ENCODE measurements at regions of chr1 and their contacts with region 1.

Region 1: DNA sequence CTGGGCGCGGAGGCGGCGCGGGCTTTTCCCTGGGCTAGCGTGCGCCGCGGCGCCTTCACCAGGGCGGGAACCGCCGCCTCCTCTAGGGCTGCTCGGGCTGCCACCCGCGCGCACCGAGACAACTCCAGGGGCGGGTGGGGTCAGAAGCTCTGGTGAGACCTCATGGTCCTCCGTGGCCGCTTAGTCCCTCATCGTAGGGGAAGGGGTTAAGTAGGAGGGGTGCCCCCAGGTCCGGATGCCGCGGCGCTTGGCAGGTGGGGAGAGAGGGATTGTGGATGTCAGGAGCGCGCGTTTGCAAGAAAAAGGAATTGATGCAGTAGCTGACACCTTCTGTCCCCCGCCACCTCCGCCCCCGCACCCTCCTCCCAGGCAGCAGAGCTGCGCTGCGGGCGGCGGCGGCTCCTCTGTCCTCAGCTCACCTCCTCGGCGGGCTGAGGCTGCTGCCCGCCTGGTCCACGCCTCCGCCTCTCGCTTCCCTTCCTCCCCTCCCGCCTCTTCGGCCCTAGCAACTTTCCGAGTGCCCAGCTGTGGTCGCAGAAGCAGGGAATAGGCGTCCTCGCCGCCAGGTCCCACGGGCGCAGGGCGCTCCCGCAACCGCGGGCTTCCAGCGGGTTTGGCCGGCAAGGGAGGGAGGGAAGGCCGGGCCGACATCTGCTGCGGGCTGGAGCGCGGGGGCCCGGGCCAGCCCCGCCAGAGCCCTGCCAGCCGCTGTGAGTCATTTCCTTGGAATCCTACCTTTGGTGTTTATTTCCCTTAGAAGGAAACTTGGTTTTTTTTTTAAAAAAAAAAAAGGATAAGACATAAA is 822 bp downstream of the SERTAD4 start:
- DNase-seq: peak in 1 of 2 donors; percentile 52
- ATAC-seq: peak; percentile 25 to 63 (median 47)
- H3K4me3 ChIP-seq: peak overlapping the region; percentile 38 to 82 (median 66)
- H3K27ac ChIP-seq: peak overlapping the region; percentile 42 to 96 (median 88)
- H3K4me1 ChIP-seq: peaks cover 0 to 48% (median 36%) of the 10 kb centered on the region in 9 donors
- H3K27me3 ChIP-seq: peaks cover 0 to 86% (median 5%) of the 10 kb centered on the region in 7 donors
- CTCF ChIP-seq: no peak

Region 2: GRCh38 chr1:209965996-209966395 is 267.4 kb before region 1 on chr1:
- intact Hi-C with region 1: no loop called
- DNase-seq: no peak
- ATAC-seq: no peak
- H3K4me3 ChIP-seq: no peak overlapping the region
- H3K27ac ChIP-seq: no peak overlapping the region
- H3K4me1 ChIP-seq: no peaks in the 10 kb centered on the region
- H3K27me3 ChIP-seq: peaks cover 0 to under 1% (median 0%) of the 10 kb centered on the region in 7 donors
- CTCF ChIP-seq: no peak

Region 3: DNA sequence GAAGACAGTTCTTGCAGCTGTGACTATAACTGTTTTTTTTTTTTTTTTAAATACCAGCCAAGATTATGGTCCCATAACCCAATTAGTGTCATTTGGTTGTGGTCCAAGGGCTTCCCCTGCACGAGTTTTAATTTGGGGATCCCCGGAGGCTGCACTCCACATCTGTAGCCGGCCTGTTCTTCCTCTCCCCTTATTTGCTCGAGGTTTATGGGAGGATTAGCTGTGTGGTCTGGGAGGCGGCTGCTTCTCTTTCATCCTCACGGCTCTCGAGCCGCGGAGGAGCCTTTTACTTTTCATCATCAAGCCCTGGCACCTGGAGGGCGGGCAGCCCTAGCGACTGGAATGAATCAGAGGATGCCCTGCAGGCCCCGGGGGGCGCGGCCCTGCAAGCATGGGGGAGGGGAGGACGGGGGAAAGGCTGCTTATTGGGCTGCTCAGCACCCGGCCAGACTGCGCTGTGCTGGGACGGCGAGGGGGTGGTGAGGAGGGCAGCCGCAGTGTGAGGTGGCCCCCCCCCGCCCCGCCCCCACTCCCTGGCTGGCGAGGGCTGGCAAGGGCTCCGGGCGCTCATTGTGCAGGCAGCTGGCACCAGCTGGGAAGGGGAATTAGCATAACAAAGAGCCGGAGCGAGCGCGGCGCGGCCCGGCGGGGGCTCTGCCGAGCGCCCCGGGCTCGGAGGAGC is 17.7 kb after region 1 on chr1:
- intact Hi-C with region 1: loop called in 1 of 10 experiments (anchors 1 kb)
- DNase-seq: peak; percentile 35 to 42
- ATAC-seq: peak; percentile 44 to 71 (median 62)
- H3K4me3 ChIP-seq: peak overlapping the region in 9 of 10 donors; percentile 44 to 60 (median 56)
- H3K27ac ChIP-seq: peak overlapping the region in 5 of 10 donors; percentile 35 to 56 (median 44)
- H3K4me1 ChIP-seq: peaks cover 0 to 30% (median 22%) of the 10 kb centered on the region in 9 donors
- H3K27me3 ChIP-seq: peaks cover 0 to 64% (median 22%) of the 10 kb centered on the region in 7 donors
- CTCF ChIP-seq: no peak

Region 4: GRCh38 chr1:210262167-210262896 is 28.9 kb after region 1 on chr1:
- intact Hi-C with region 1: loop called in 1 of 10 experiments (anchors 2 kb)
- DNase-seq: peak; percentile 27 to 67
- ATAC-seq: peak; percentile 66 to 88 (median 84)
- H3K4me3 ChIP-seq: peak overlapping the region in 1 of 10 donors; percentile 6
- H3K27ac ChIP-seq: peak overlapping the region in 9 of 10 donors; percentile 13 to 86 (median 72)
- H3K4me1 ChIP-seq: peaks cover 0 to 52% (median 26%) of the 10 kb centered on the region in 9 donors
- H3K27me3 ChIP-seq: peaks cover 0 to 10% (median 3%) of the 10 kb centered on the region in 7 donors
- CTCF ChIP-seq: no peak